Activated CD4-positive, alpha-beta T cell treated with anti-CD3 and anti-CD28 coated beads for 36 hours (primary cell): ENCODE measurements at regions of chr2 and their contacts with region 1.

Region 1: DNA sequence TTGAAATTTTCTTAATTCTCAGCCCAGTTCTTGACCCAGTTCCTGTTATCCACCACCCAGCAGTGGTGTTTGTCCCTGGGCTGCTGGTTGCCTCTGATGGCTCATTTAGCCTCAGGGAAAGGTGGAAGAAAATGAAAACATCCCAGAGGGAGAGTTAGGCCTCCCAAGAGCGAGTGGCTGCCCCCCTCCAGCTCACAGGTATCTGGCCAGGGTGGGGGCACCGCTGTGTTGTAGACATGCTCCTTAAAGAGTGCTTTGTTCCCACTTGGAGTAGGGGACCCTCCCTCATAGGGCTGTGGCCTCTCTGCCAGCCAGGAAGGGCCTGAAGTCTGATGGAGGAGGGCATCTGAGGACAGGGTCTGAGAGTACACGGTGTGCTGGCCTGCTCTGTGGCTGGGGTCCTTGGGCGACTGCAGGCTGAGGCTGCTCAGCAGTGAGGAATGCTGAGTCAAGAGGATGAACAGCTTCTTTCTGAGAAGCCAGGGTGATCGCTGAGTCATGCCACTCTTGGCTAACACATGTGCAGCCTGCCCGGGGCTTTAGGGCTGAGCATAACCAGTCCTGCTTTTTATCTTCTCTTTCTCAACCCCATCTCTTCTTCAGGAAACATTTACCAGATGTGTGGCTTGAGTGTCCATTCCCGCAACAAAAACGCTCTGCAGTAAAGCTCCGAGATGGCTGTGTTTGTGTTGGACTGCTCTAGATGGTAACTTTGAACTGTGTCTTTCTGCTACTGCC is 72.3 kb downstream of the IL1R2 start:
- DNase-seq: peak; percentile 77
- ATAC-seq: peak; percentile 35
- H3K4me3 Mint-ChIP-seq: no peak overlapping the region
- H3K27ac Mint-ChIP-seq: peak overlapping the region; percentile 86
- H3K4me1 Mint-ChIP-seq: peaks cover 38% of the 10 kb centered on the region
- H3K27me3 Mint-ChIP-seq: no peaks in the 10 kb centered on the region

Region 2: GRCh38 chr2:101823347-101823791 is 240.7 kb before region 1 on chr2:
- CTCF ChIA-PET with region 1: no interaction called
- POLR2A ChIA-PET with region 1: no interaction called
- intact Hi-C with region 1: no loop called
- DNase-seq: peak; percentile 83
- ATAC-seq: peak; percentile 79
- H3K4me3 Mint-ChIP-seq: peak overlapping the region; percentile 20
- H3K27ac Mint-ChIP-seq: peak overlapping the region; percentile 83
- H3K4me1 Mint-ChIP-seq: peaks cover 73% of the 10 kb centered on the region
- H3K27me3 Mint-ChIP-seq: no peaks in the 10 kb centered on the region

Region 3: GRCh38 chr2:101900375-101900774 is 163.7 kb before region 1 on chr2:
- CTCF ChIA-PET with region 1: no interaction called
- POLR2A ChIA-PET with region 1: no interaction called
- intact Hi-C with region 1: loop called in 1 of 2 experiments (anchors 1 kb)
- DNase-seq: peak; percentile 82
- ATAC-seq: peak; percentile 93
- H3K4me3 Mint-ChIP-seq: peak overlapping the region; percentile 24
- H3K27ac Mint-ChIP-seq: peak overlapping the region; percentile 90
- H3K4me1 Mint-ChIP-seq: peaks cover 38% of the 10 kb centered on the region
- H3K27me3 Mint-ChIP-seq: peaks cover 10% of the 10 kb centered on the region

Region 4: DNA sequence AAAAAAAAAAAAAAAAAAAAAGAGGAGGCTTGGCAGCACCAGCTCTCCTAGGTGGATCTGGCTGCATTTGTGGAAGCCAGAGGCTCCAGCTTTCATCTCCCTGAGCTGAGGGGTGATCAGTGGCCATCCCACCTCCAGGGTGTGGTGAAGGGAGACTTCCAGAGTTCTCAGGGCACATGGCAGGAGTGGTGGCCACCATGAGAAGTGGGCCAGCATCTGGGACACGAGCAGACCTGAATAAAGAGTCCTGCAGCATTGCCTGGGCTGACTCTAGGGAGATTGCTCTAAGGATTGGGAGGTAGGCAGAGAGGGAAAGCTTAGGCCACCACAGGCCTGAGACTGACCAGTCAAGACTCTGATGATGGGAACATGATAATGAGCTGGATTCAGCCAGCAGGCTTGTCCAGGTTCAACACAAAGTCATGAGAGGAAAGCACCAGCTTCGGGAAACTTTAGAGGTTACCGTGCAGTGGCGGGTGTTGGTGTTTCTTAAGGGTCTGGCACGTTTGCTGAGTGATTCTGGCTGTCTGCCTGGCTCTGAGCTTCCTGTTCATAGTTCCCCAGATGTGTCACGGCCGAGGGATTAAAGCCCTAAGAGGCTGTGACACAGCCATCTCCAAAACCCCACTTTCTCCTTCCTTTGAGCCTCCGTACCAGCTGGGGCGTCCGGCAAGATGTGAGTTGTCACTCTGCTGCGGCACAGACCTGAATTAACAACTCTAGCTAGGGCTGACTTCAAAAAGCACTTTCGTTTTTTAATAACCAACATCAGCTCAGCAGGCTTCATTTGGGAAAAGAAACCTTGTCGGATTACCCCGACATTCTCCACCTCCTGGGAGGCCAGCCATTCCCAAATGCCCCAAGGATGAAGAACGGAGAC is 40.1 kb after region 1 on chr2:
- CTCF ChIA-PET with region 1: interaction called, 4 read pairs
- POLR2A ChIA-PET with region 1: interaction called, 8 read pairs
- intact Hi-C with region 1: loop called (anchors 1 to 2 kb)
- DNase-seq: peak; percentile 92
- ATAC-seq: peak; percentile 78
- H3K4me3 Mint-ChIP-seq: peak overlapping the region; percentile 80
- H3K27ac Mint-ChIP-seq: peak overlapping the region; percentile 84
- H3K4me1 Mint-ChIP-seq: peaks cover 59% of the 10 kb centered on the region
- H3K27me3 Mint-ChIP-seq: peaks cover 11% of the 10 kb centered on the region

Region 5: GRCh38 chr2:102114290-102114721 is 50.2 kb after region 1 on chr2:
- CTCF ChIA-PET with region 1: interaction called, 3 read pairs
- POLR2A ChIA-PET with region 1: no interaction called
- intact Hi-C with region 1: loop called in 1 of 2 experiments (anchors 1 kb)
- DNase-seq: peak; percentile 52
- ATAC-seq: peak; percentile 87
- H3K4me3 Mint-ChIP-seq: peak overlapping the region; percentile 1
- H3K27ac Mint-ChIP-seq: peak overlapping the region; percentile 55
- H3K4me1 Mint-ChIP-seq: peaks cover 86% of the 10 kb centered on the region
- H3K27me3 Mint-ChIP-seq: peaks cover 14% of the 10 kb centered on the region

Region 6: GRCh38 chr2:102138331-102138730 is 74.2 kb after region 1 on chr2:
- CTCF ChIA-PET with region 1: interaction called, 4 read pairs
- POLR2A ChIA-PET with region 1: interaction called, 4 read pairs
- intact Hi-C with region 1: loop called (anchors 1 kb)
- DNase-seq: no peak
- ATAC-seq: peak; percentile 7
- H3K4me3 Mint-ChIP-seq: peak overlapping the region; percentile 7
- H3K27ac Mint-ChIP-seq: peak overlapping the region; percentile 89
- H3K4me1 Mint-ChIP-seq: peaks cover 64% of the 10 kb centered on the region
- H3K27me3 Mint-ChIP-seq: peaks cover 23% of the 10 kb centered on the region

Region 7: GRCh38 chr2:102147935-102148334 is 83.8 kb after region 1 on chr2:
- CTCF ChIA-PET with region 1: interaction called, 3 read pairs
- POLR2A ChIA-PET with region 1: interaction called, 3 read pairs
- intact Hi-C with region 1: loop called in 1 of 2 experiments (anchors 1 kb)
- DNase-seq: peak; percentile 81
- ATAC-seq: peak; percentile 87
- H3K4me3 Mint-ChIP-seq: no peak overlapping the region
- H3K27ac Mint-ChIP-seq: peak overlapping the region; percentile 89
- H3K4me1 Mint-ChIP-seq: peaks cover 26% of the 10 kb centered on the region
- H3K27me3 Mint-ChIP-seq: peaks cover 7% of the 10 kb centered on the region

Region 8: DNA sequence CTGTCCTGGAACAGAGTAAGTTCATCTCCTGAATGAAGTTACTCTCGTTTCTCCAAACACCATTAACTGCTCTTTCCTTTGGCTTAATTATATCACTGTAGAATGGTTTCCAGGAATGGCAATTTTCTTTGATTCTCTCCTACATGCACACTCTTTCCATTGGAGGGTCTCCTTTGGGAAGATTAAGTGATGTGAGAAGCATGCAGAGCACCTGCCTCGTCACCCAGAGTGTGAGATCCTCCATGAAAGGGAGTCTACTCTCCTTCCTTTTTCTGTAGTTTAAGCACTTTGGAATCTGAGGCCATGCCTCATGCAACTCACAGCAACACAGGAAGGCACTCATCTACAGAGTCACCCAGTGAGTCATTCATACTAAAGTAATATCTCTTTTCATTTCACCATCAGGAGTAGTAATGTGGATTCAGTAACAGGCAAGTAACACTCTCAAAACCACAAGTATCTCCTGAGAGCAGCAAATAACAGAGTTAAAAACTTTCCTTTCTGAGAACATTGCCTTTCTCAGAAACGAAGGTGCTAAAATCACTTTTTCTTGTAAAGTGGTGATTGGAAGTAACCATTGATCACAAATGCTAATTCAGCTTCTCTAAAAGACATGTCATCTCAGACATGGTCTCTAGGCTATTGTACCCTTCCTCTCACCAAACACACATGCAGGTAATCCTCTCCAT is 194.4 kb after region 1 on chr2:
- CTCF ChIA-PET with region 1: no interaction called
- POLR2A ChIA-PET with region 1: no interaction called
- intact Hi-C with region 1: loop called in 1 of 2 experiments (anchors 1 kb)
- DNase-seq: peak; percentile 63
- ATAC-seq: peak; percentile 92
- H3K4me3 Mint-ChIP-seq: peak overlapping the region; percentile 26
- H3K27ac Mint-ChIP-seq: peak overlapping the region; percentile 97
- H3K4me1 Mint-ChIP-seq: peaks cover 45% of the 10 kb centered on the region
- H3K27me3 Mint-ChIP-seq: no peaks in the 10 kb centered on the region